Vagina (tissue), 2 donors: ENCODE measurements at regions of chr11 and their contacts with region 1.

Region 1: GRCh38 chr11:19553683-19554333 is 158.8 kb upstream of the NAV2 start:
- DNase-seq: no peak
- H3K4me3 ChIP-seq: no peak overlapping the region
- H3K27ac ChIP-seq: no peak overlapping the region
- H3K4me1 ChIP-seq: no peaks in the 10 kb centered on the region
- H3K27me3 ChIP-seq: no peaks in the 10 kb centered on the region
- CTCF ChIP-seq: peak; percentile 73 to 86 (median 83)
- POLR2A ChIP-seq: no peak

Region 2: DNA sequence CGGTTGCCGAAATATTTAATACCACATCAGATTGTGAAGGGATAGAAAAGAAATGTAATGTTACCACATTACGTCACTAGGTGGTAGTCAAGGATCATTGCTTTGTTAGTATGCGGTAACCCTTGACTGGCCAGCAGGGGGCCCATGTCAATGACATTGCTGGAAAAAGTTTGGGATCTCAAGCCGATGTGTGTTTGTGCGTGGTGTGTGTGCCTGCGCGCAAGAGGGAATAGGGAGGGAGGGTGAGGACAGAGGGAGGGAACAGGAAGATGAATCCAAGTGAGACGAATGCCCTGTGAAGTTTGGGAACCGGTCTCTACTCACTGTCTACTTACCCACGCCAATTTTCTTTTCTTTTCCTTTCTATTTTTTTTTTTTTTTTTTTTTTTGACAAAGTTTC is 482.6 kb before region 1 on chr11:
- intact Hi-C with region 1: loop called (anchors 5 kb)
- DNase-seq: no peak
- H3K4me3 ChIP-seq: no peak overlapping the region
- H3K27ac ChIP-seq: no peak overlapping the region
- H3K4me1 ChIP-seq: peaks cover 4% of the 10 kb centered on the region
- H3K27me3 ChIP-seq: no peaks in the 10 kb centered on the region
- CTCF ChIP-seq: peak; percentile 86 to 96 (median 90)
- POLR2A ChIP-seq: no peak

Region 3: GRCh38 chr11:19306179-19306944 is 247.4 kb before region 1 on chr11:
- intact Hi-C with region 1: loop called (anchors 2 kb)
- DNase-seq: no peak
- H3K4me3 ChIP-seq: no peak overlapping the region
- H3K27ac ChIP-seq: no peak overlapping the region
- H3K4me1 ChIP-seq: no peaks in the 10 kb centered on the region
- H3K27me3 ChIP-seq: no peaks in the 10 kb centered on the region
- CTCF ChIP-seq: no peak
- POLR2A ChIP-seq: no peak

Region 4: DNA sequence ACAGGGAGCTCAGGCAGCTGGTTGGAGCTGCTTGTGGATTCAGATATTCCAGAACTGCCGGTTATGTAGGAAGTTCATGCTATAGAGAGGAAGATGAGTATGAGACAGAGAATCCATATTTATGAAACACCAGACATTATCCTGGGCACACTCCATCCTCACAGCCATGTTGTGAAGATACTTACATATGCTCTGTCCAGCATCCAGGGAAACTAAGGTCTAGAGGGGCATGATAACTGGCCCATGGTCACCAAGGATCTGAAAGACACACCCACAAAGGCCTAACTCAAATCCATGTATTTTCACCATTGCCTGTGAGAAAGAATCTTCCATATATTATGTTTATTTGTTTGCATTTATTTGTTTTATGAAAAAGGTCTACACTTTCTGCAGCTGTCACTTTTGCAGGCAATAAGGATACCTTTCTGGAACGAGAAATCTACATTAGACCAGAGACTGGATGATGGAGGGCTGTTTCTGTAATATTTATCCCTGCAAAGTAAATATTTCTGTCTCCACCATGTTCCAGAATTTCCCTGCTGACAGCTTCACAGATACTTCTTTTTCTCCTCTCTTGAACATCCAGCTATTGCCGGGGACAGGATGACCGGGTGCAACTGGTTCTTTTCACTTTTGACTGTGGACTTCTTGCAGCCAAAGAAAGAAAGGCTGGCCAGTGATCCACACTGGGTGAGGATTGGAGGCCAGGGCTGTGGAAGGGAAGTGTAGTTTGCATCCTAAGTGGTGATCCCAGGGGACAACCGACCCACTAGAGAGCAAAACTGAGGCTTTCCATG is 13.0 kb after region 1 on chr11:
- intact Hi-C with region 1: no loop called
- DNase-seq: no peak
- H3K4me3 ChIP-seq: no peak overlapping the region
- H3K27ac ChIP-seq: no peak overlapping the region
- H3K4me1 ChIP-seq: peaks cover 12% of the 10 kb centered on the region
- H3K27me3 ChIP-seq: no peaks in the 10 kb centered on the region
- CTCF ChIP-seq: no peak
- POLR2A ChIP-seq: no peak

Region 5: GRCh38 chr11:19903620-19904069 is 349.8 kb after region 1 on chr11:
- intact Hi-C with region 1: loop called (anchors 10 kb)
- DNase-seq: no peak
- H3K4me3 ChIP-seq: no peak overlapping the region
- H3K27ac ChIP-seq: no peak overlapping the region
- H3K4me1 ChIP-seq: no peaks in the 10 kb centered on the region
- H3K27me3 ChIP-seq: no peaks in the 10 kb centered on the region
- CTCF ChIP-seq: peak; percentile 12 to 64 (median 62)
- POLR2A ChIP-seq: no peak